B cell (primary cell): ENCODE measurements at regions of chr3 and their contacts with region 1.

Region 1: DNA sequence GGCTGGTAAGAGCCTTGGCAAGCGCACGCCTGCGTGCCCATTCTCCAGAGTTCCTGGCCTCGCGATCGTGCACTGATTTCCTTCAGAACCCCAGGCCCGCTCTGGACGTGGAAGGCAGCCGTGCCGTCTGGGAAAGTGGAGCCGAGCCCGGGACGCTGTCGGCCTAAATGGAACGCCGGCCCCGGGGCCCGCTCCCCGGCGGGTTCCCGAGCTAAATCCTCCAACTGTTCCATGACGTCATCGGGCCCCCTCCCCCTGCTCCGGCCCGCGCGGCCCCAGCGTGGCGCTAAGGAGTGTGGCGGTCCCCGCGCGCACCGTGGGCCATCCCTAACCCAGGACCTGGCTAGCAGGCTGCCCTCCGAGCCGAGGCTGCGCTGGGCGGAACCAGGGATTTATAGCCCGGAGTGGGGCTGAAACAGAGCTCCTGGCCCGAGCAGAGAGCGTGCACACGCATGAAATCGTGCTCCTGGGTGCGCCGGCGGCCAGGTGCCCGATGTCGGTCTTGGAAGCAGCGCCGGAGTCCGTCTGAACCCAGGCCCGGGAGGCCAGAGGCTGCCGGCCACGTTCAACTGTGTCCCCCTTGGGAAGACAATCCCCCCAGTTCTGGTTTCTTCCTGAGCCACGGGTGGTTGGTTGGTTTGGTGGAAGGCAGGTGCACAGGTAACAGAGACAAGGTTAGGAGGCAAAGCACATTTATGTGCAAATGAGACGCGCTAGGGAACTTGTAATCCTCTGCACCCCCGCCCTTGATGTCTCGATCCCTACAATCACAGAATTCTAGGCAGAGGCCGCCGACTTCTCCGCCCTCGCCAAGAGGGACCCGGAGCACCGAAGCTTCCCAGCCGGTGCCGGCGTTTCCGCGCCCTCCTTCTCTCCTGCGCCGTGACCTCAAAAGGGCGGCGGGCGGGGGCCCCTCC is 84.9 kb upstream of the ETV5 start:
- DNase-seq: peak; percentile 23
- ATAC-seq: no peak
- H3K4me3 ChIP-seq: peak overlapping the region in 2 of 5 experiments; percentile 34 to 36
- H3K4me3 Mint-ChIP-seq: peak overlapping the region; percentile 20
- H3K27ac ChIP-seq: no peak overlapping the region
- H3K27ac Mint-ChIP-seq: no peak overlapping the region
- H3K4me1 ChIP-seq: peaks cover 10 to 13% of the 10 kb centered on the region in 2 donors
- H3K4me1 Mint-ChIP-seq: peaks cover 7% of the 10 kb centered on the region
- H3K27me3 ChIP-seq: peaks cover 0 to 31% (median 13%) of the 10 kb centered on the region in 4 experiments
- H3K27me3 Mint-ChIP-seq: peaks cover 18% of the 10 kb centered on the region
- CTCF ChIP-seq: no peak

Region 2: DNA sequence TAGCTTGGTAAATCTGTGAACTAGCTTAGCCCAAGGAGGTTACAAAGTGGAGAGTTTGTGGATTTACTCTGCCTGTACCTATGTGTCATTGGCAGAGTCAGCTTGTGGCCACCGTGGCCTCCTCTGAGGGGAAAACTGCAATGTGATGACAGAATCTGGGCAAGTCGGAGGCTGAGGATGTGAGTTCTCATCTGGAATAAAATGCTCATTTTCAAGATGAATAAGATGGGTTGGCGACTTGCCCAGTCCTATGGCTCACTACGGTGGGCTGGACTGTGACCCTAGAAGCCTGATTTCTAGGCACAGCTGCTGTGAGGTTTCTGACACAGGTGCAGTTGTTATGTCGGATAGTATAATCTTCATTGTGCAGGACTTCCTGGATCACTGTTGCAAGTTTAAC is 168.6 kb before region 1 on chr3:
- CTCF ChIA-PET with region 1: no interaction called
- POLR2A ChIA-PET with region 1: no interaction called
- intact Hi-C with region 1: no loop called
- DNase-seq: no peak
- ATAC-seq: no peak
- H3K4me3 ChIP-seq: no peak overlapping the region
- H3K4me3 Mint-ChIP-seq: no peak overlapping the region
- H3K27ac ChIP-seq: no peak overlapping the region
- H3K27ac Mint-ChIP-seq: no peak overlapping the region
- H3K4me1 ChIP-seq: no peaks in the 10 kb centered on the region
- H3K4me1 Mint-ChIP-seq: no peaks in the 10 kb centered on the region
- H3K27me3 ChIP-seq: peaks cover 0 to 3% (median 0%) of the 10 kb centered on the region in 4 experiments
- H3K27me3 Mint-ChIP-seq: peaks cover 10% of the 10 kb centered on the region
- CTCF ChIP-seq: no peak

Region 3: DNA sequence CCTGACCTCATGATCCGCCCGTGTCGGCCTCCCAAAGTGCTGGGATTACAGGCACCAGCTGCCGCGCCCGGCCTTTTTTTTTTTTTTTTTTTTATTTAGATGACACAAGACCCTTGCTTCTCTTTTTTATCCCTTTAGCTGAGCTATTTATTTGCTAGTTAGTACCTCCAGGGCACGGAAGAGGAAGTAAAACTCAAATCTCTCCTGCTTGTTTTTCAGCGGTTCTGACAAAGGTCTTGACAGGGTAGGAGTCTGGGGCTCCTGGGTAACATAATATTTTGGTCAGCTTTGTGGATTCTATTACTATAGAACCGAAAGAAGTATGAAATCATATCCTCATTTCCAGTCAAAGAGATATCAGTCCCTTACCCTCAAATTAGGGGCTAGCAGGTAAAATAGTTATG is 40.9 kb before region 1 on chr3:
- CTCF ChIA-PET with region 1: no interaction called
- POLR2A ChIA-PET with region 1: no interaction called
- intact Hi-C with region 1: loop called (anchors 5 kb)
- DNase-seq: peak; percentile 88
- ATAC-seq: peak; percentile 90
- H3K4me3 ChIP-seq: peak overlapping the region in 3 of 5 experiments; percentile 29 to 34 (median 30)
- H3K4me3 Mint-ChIP-seq: peak overlapping the region; percentile 60
- H3K27ac ChIP-seq: peak overlapping the region; percentile 81 to 89
- H3K27ac Mint-ChIP-seq: peak overlapping the region; percentile 95
- H3K4me1 ChIP-seq: peaks cover 28 to 40% of the 10 kb centered on the region in 2 donors
- H3K4me1 Mint-ChIP-seq: peaks cover 35% of the 10 kb centered on the region
- H3K27me3 ChIP-seq: no peaks in the 10 kb centered on the region
- H3K27me3 Mint-ChIP-seq: no peaks in the 10 kb centered on the region
- CTCF ChIP-seq: no peak

Region 4: GRCh38 chr3:186425788-186426730 is 232.3 kb after region 1 on chr3:
- CTCF ChIA-PET with region 1: no interaction called
- POLR2A ChIA-PET with region 1: no interaction called
- intact Hi-C with region 1: no loop called
- DNase-seq: no peak
- ATAC-seq: peak; percentile 17
- H3K4me3 ChIP-seq: no peak overlapping the region
- H3K4me3 Mint-ChIP-seq: peak overlapping the region; percentile 18
- H3K27ac ChIP-seq: no peak overlapping the region
- H3K27ac Mint-ChIP-seq: no peak overlapping the region
- H3K4me1 ChIP-seq: peaks cover 8 to 19% of the 10 kb centered on the region in 2 donors
- H3K4me1 Mint-ChIP-seq: peaks cover 25% of the 10 kb centered on the region
- H3K27me3 ChIP-seq: no peaks in the 10 kb centered on the region
- H3K27me3 Mint-ChIP-seq: peaks cover 6% of the 10 kb centered on the region
- CTCF ChIP-seq: peak; percentile 16